HEK293T (cell line): ENCODE measurements at regions of chr10 and their contacts with region 1.

Region 1: GRCh38 chr10:96229568-96230030 is 41.8 kb downstream of the BLNK start:
- DNase-seq: peak; percentile 86

Region 2: GRCh38 chr10:96287392-96288105 is 58.0 kb after region 1 on chr10:
- CTCF ChIA-PET with region 1: interaction called, 62 read pairs
- POLR2A ChIA-PET with region 1: interaction called, 5 read pairs
- DNase-seq: no peak

Region 3: DNA sequence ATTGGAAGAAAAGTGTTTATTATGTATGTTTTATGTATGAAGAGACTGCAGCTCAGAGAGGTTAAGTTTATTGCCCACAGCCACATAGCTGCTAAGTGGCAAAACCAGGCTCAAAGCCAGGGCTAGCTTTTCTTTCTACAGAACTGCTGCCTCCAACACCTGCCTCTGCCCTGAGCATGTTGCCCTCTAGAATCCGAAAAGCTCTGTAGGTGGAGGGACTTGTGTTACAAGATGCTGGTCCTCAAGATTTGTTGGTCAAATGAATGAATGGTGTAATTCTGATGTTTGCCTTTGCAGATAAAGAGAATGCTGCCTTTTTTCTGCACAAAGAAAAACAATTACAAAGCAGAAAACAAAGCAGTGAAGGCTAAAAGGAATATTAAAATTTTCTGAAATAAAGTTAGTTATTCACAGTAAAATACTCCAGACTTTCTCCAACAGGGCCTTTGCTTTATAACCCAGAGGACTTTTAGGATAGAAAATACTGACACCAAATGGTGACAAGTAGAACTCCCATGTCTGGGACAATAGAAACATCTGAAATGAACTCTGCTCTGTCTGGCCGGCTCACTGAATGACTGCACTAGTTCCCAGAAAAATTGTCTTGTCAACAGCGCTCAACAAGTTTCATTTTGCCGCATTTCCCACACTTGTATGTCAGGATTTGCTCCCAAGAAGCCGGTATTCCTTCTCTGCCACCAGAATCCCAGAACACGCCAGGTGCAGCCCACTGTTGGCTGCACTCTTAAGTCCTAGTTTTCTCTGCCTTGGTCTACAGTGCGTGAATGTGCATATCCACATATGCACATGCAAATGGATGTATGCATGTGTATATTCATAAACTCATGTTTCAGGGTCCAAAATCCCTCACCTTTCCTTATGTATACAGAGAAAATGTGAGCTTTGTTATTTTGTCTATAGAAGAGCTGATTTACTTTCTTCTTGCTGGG is 63.6 kb after region 1 on chr10:
- CTCF ChIA-PET with region 1: interaction called, 62 read pairs
- POLR2A ChIA-PET with region 1: interaction called, 5 read pairs
- DNase-seq: peak; percentile 62

Region 4: DNA sequence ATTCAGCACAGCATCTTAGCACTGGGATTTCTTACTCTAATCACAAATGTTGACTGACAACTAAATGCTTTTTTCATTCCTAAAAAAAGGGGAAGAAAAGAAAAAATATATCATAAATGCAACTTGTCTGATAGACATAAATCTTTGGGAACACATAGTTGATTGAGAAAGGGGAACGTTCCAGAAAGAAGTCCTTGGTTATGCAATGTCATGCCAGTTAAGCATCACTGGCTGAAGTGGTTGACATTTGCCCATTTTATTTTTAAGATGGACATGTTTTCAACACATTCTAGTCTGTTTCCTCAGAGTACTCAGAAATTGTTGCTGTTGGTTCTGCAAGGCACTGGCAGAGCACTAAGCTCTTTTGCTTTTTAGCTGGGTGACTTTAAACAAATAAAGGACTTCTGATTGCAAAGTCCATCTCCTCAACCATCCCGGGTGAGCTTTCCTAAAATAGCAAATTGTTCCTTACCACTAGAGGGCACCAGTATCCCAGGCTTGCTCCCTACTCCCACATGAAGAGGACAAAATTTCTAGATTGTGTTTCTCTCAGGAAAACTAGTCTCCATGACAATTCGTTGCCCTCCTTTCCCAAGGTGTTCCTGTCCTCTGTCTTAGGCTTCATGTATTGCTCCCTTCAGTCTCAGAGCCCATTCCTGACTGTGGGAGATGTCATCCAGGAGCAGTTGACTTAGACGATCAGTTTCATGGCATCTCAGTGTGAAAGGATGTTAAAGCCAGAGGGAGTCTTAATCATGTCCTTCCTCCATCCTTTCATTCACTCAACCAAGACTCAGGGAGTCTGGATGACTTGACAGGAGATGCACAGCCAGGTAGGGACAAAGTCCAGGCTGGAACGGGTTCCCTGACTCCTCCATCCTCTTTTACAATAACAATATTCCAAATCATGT is 105.3 kb after region 1 on chr10:
- CTCF ChIA-PET with region 1: interaction called, 10 read pairs
- POLR2A ChIA-PET with region 1: no interaction called
- DNase-seq: peak; percentile 76